ENCODE measurements at regions of chrX and their contacts with region 1.

Region 1: DNA sequence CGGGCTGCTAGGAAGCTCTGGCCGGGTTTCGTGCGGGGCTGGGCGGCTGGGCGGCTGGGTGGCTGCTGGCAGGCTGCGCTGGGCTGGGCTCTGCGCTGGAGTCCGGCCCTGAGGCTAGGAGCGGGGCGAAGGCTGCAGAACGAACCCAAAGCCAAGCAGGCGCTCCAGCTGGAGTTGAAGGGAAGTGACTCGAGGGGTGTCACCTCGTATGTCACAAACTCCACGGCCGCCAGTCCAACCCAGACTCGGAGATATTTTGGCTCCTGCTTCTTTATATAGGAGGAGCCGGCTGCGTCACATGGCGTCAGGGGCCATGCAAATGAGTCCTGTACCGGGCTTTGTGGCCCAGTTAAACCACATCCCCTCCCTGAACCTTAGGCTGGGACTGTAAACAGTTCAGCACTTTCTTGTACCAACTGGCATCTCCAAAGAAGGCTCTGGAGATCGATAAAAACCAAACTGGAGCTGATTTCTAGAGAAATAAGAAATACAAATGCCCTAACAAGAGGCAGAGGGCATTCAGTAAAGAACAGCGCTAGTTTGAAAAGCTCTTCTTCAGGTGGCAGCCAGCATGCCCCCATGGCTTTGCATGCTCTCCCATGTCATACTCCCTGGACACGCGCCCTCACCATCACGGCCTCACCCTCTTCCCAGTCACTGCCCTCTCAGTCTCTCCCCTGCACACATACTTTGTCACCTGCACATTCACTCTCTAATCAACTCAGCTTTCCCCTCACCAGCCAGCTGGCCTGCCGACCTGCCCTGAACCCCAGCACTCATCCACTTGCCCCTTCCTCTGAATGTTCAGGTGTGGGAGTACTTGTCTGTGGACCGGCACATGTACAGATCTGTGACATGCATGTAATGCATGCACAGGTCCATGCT is 58.5 kb downstream of the TSC22D3 start:
- H3K4me3 Mint-ChIP-seq: peak overlapping the region; percentile 96
- H3K27ac Mint-ChIP-seq: peak overlapping the region; percentile 91
- H3K4me1 Mint-ChIP-seq: peaks cover 59% of the 10 kb centered on the region
- H3K27me3 Mint-ChIP-seq: peaks cover 7% of the 10 kb centered on the region

Region 2: GRCh38 chrX:107672955-107673378 is 44.1 kb before region 1 on chrX:
- intact Hi-C with region 1: loop called (anchors 1 kb)
- H3K4me3 Mint-ChIP-seq: no peak overlapping the region
- H3K27ac Mint-ChIP-seq: peak overlapping the region; percentile 95
- H3K4me1 Mint-ChIP-seq: peaks cover 44% of the 10 kb centered on the region
- H3K27me3 Mint-ChIP-seq: no peaks in the 10 kb centered on the region

Region 3: DNA sequence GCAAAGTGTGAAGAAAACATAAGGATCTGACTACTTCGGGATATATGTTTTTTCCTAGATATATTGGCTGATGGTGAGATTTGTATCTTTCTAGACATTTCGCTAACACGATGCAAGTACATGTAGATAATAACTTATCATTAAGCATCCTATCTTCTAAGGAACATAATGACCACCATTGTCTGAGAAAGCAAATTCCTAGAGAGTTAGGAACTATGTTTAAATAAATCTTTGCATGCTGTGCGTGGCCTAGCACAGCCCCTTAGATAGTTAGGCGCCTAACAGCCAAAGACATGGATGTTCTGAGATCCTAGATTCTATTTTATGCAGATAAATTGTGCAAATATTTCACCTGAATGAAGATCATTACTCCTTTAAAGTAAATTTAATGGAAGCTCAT is 718.2 kb after region 1 on chrX:
- intact Hi-C with region 1: no loop called
- H3K4me3 Mint-ChIP-seq: no peak overlapping the region
- H3K27ac Mint-ChIP-seq: no peak overlapping the region
- H3K4me1 Mint-ChIP-seq: peaks cover 9% of the 10 kb centered on the region
- H3K27me3 Mint-ChIP-seq: peaks cover 23% of the 10 kb centered on the region